Activated B cell treated with CpG ODN at 0.5 μM for 24 hours (primary cell): ENCODE measurements at regions of chr16 and their contacts with region 1.

Region 1: DNA sequence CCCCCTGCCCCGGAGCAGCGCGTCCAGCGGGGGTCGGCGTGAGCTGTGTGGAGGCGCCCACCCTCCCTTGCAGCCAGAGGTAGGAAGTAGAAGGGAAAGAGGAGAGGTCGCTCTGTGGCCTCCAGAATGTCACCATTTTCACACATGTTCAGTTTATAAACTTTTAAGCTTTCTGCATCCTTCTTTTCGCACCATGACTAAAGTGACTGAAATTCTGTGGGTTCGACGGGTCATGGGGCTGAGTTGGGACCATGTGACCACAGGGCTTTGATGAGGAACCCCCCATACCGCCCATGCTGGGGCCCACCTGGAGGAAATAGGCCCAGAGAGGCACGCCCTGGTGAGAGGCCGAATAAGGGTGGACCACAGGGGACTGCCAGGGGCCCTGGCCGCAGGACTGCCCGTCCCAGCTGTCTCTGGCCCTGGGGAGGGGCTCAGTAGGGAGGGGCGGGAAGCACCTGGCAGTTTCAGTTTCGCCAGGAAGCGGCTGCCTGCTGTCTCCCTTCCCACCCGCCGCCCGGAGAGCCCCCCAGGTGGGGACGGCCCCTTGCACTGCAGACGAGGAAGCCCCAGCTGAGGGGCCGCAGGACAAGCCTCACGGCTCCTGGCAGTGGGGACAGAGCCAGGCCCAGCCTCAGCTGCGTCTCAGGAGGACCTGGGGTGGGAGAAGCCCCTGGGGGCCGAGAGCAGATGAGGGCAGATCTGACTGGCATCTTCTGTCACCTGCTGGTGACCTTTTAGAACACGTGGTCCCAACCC is 9.0 kb downstream of the CBFA2T3 start:
- DNase-seq: peak; percentile 85
- ATAC-seq: peak; percentile 80
- H3K4me3 Mint-ChIP-seq: peak overlapping the region; percentile 75
- H3K27ac Mint-ChIP-seq: peak overlapping the region; percentile 86
- H3K4me1 Mint-ChIP-seq: peaks cover 86% of the 10 kb centered on the region
- H3K27me3 Mint-ChIP-seq: no peaks in the 10 kb centered on the region
- CTCF ChIP-seq: no peak

Region 2: GRCh38 chr16:88743693-88744576 is 224.1 kb before region 1 on chr16:
- CTCF ChIA-PET with region 1: no interaction called
- POLR2A ChIA-PET with region 1: no interaction called
- intact Hi-C with region 1: no loop called
- DNase-seq: peak; percentile 67
- ATAC-seq: no peak
- H3K4me3 Mint-ChIP-seq: no peak overlapping the region
- H3K27ac Mint-ChIP-seq: no peak overlapping the region
- H3K4me1 Mint-ChIP-seq: peaks cover 55% of the 10 kb centered on the region
- H3K27me3 Mint-ChIP-seq: no peaks in the 10 kb centered on the region
- CTCF ChIP-seq: peak; percentile 89

Region 3: GRCh38 chr16:88905563-88905962 is 62.4 kb before region 1 on chr16:
- CTCF ChIA-PET with region 1: no interaction called
- POLR2A ChIA-PET with region 1: no interaction called
- intact Hi-C with region 1: no loop called
- DNase-seq: no peak
- ATAC-seq: peak; percentile 70
- H3K4me3 Mint-ChIP-seq: no peak overlapping the region
- H3K27ac Mint-ChIP-seq: no peak overlapping the region
- H3K4me1 Mint-ChIP-seq: peaks cover 22% of the 10 kb centered on the region
- H3K27me3 Mint-ChIP-seq: no peaks in the 10 kb centered on the region
- CTCF ChIP-seq: no peak

Region 4: GRCh38 chr16:88983771-88984687 is 16.0 kb after region 1 on chr16:
- CTCF ChIA-PET with region 1: interaction called, 3 read pairs
- POLR2A ChIA-PET with region 1: interaction called, 165 read pairs
- intact Hi-C with region 1: loop called (anchors 1 kb)
- DNase-seq: peak; percentile 82
- ATAC-seq: peak; percentile 82
- H3K4me3 Mint-ChIP-seq: peak overlapping the region; percentile 76
- H3K27ac Mint-ChIP-seq: peak overlapping the region; percentile 82
- H3K4me1 Mint-ChIP-seq: peaks cover 80% of the 10 kb centered on the region
- H3K27me3 Mint-ChIP-seq: no peaks in the 10 kb centered on the region
- CTCF ChIP-seq: no peak

Region 5: GRCh38 chr16:89031715-89032659 is 64.0 kb after region 1 on chr16:
- CTCF ChIA-PET with region 1: no interaction called
- POLR2A ChIA-PET with region 1: interaction called, 13 read pairs
- intact Hi-C with region 1: loop called (anchors 1 kb)
- DNase-seq: peak; percentile 57
- ATAC-seq: peak; percentile 99
- H3K4me3 Mint-ChIP-seq: peak overlapping the region; percentile 66
- H3K27ac Mint-ChIP-seq: peak overlapping the region; percentile 84
- H3K4me1 Mint-ChIP-seq: peaks cover 27% of the 10 kb centered on the region
- H3K27me3 Mint-ChIP-seq: peaks cover 7% of the 10 kb centered on the region
- CTCF ChIP-seq: no peak

Region 6: GRCh38 chr16:89048090-89048904 is 80.3 kb after region 1 on chr16:
- CTCF ChIA-PET with region 1: no interaction called
- POLR2A ChIA-PET with region 1: no interaction called
- intact Hi-C with region 1: no loop called
- DNase-seq: no peak
- ATAC-seq: no peak
- H3K4me3 Mint-ChIP-seq: no peak overlapping the region
- H3K27ac Mint-ChIP-seq: no peak overlapping the region
- H3K4me1 Mint-ChIP-seq: peaks cover 7% of the 10 kb centered on the region
- H3K27me3 Mint-ChIP-seq: peaks cover 3% of the 10 kb centered on the region
- CTCF ChIP-seq: no peak

Region 7: GRCh38 chr16:89060207-89060794 is 92.3 kb after region 1 on chr16:
- CTCF ChIA-PET with region 1: no interaction called
- POLR2A ChIA-PET with region 1: interaction called, 4 read pairs
- intact Hi-C with region 1: loop called (anchors 2 kb)
- DNase-seq: peak; percentile 55
- ATAC-seq: peak; percentile 81
- H3K4me3 Mint-ChIP-seq: peak overlapping the region; percentile 68
- H3K27ac Mint-ChIP-seq: peak overlapping the region; percentile 89
- H3K4me1 Mint-ChIP-seq: peaks cover 50% of the 10 kb centered on the region
- H3K27me3 Mint-ChIP-seq: no peaks in the 10 kb centered on the region
- CTCF ChIP-seq: no peak

Region 8: GRCh38 chr16:89093602-89094251 is 125.7 kb after region 1 on chr16 and contains the start of gene ACSF3:
- CTCF ChIA-PET with region 1: no interaction called
- POLR2A ChIA-PET with region 1: interaction called, 17 read pairs
- intact Hi-C with region 1: loop called (anchors 1 kb)
- DNase-seq: peak; percentile 77
- ATAC-seq: peak; percentile 72
- H3K4me3 Mint-ChIP-seq: peak within 1 kb of the TSS; percentile 97
- H3K27ac Mint-ChIP-seq: peak within 1 kb of the TSS; percentile 93
- H3K4me1 Mint-ChIP-seq: peaks cover 46% of the 10 kb centered on the region
- H3K27me3 Mint-ChIP-seq: peaks cover 16% of the 10 kb centered on the region
- CTCF ChIP-seq: no peak
- total RNA-seq, gene ACSF3: 59.6 and 78.0 TPM in 2 replicates

Region 9: DNA sequence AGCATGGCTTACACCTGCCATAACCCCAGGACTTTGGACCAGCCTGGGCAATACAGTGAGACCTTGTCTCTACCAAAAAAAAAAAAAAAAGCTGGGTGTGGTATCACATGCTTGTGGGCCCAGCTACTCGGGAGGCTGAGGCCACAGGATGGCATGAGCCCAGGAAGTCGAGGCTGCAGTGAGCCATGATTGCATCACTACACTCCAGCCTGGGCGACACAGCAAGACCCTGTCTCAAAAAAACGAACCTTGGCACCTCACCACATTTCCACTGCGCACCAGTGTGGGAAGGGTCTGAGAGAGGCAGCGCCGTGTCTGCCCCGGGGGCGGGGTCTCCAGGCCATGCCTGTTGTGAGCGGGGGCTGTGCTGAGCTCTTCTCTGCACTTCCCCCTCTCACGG is 131.9 kb after region 1 on chr16:
- CTCF ChIA-PET with region 1: no interaction called
- POLR2A ChIA-PET with region 1: interaction called, 17 read pairs
- intact Hi-C with region 1: loop called (anchors 1 kb)
- DNase-seq: no peak
- ATAC-seq: no peak
- H3K4me3 Mint-ChIP-seq: no peak overlapping the region
- H3K27ac Mint-ChIP-seq: no peak overlapping the region
- H3K4me1 Mint-ChIP-seq: peaks cover 54% of the 10 kb centered on the region
- H3K27me3 Mint-ChIP-seq: no peaks in the 10 kb centered on the region
- CTCF ChIP-seq: no peak

Region 10: DNA sequence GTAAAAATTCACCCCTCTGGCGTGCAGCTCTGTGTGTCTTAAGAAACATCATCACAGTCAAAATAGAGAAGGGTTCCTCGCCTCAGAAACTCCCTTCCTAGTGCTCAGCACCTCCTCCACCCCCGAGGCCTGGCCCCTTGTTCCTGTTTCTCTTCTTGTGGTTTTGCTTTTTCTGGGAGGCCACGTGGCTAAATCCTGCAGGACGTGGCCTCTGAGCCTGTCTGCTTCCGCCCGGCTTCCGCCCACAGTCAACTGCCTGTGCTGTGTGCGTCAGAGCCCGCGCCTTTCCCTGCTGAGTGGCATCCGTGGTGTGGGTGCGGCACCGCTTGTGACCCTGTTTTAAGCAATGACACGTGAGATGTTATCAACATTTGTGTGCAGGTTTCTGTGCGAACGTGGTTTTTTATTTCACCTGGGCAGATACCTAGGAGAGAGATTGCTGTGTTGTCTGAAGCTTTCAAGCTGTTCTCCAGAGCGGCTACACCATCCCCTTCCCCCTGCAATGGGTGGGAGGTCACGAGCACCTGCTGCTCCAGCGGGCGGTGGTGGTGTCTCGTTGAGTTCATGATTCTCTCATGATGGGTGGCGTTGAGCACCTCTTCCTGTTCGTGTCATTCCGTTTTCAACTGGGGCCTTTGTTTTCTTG is 147.3 kb after region 1 on chr16:
- CTCF ChIA-PET with region 1: no interaction called
- POLR2A ChIA-PET with region 1: interaction called, 16 read pairs
- intact Hi-C with region 1: loop called (anchors 5 kb)
- DNase-seq: peak; percentile 64
- ATAC-seq: peak; percentile 84
- H3K4me3 Mint-ChIP-seq: peak overlapping the region; percentile 78
- H3K27ac Mint-ChIP-seq: peak overlapping the region; percentile 95
- H3K4me1 Mint-ChIP-seq: peaks cover 9% of the 10 kb centered on the region
- H3K27me3 Mint-ChIP-seq: no peaks in the 10 kb centered on the region
- CTCF ChIP-seq: no peak

Region 11: DNA sequence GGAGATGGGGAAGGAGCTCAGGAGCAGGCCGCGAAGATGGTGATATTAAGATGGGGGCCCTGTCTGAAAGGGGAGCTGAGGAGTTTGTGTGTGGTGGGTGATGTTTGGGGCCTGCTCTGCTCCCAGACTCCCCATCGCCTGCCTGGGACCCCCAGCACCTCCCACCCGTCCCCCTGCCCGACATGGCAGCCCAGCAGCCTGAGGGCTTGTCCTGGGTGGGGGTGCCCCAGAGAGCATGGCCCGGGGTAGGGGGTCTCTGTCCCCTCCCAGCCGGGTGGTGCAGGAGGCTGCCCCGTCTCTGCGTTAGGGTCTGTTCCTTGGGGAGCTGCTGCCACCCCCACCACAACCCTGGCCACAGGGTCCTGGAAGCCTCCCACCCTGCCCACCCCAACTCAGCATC is 208.7 kb after region 1 on chr16:
- CTCF ChIA-PET with region 1: no interaction called
- POLR2A ChIA-PET with region 1: no interaction called
- intact Hi-C with region 1: no loop called
- DNase-seq: no peak
- ATAC-seq: no peak
- H3K4me3 Mint-ChIP-seq: no peak overlapping the region
- H3K27ac Mint-ChIP-seq: no peak overlapping the region
- H3K4me1 Mint-ChIP-seq: no peaks in the 10 kb centered on the region
- H3K27me3 Mint-ChIP-seq: no peaks in the 10 kb centered on the region
- CTCF ChIP-seq: no peak